Activated naive CD4-positive, alpha-beta T cell treated with anti-CD3 and anti-CD28 coated beads for 36 hours (primary cell): ENCODE measurements at regions of chr2 and their contacts with region 1.

Region 1: GRCh38 chr2:75403991-75404428 is 156.7 kb downstream of the EVA1A start:
- DNase-seq: no peak
- H3K4me3 Mint-ChIP-seq: no peak overlapping the region
- H3K27ac Mint-ChIP-seq: no peak overlapping the region
- H3K4me1 Mint-ChIP-seq: peaks cover 6% of the 10 kb centered on the region
- H3K27me3 Mint-ChIP-seq: no peaks in the 10 kb centered on the region

Region 2: DNA sequence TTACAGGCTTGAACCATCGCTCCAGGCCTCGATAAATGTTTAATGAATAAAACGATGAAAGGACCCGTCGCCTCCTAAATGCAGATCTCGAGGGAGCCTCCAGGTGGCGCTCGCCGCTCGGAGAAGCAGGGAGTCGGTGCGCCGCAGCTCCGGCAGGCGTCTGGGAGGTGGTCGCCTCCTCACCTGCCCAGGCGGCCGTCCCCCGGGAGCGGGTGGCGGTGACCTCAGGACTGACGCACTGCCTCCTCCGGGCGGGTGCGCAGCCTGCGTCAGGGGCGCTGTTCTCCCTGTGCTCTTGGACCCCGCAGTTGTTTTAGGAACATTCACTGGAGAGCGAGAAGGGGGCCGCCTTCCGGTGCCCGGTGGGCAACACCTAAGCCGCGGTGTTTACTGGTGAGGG is 484.2 kb before region 1 on chr2:
- CTCF ChIA-PET with region 1: interaction called, 14 read pairs
- intact Hi-C with region 1: loop called (anchors 1 kb)
- DNase-seq: peak; percentile 80
- H3K4me3 Mint-ChIP-seq: peak overlapping the region; percentile 41
- H3K27ac Mint-ChIP-seq: no peak overlapping the region
- H3K4me1 Mint-ChIP-seq: peaks cover 5% of the 10 kb centered on the region
- H3K27me3 Mint-ChIP-seq: peaks cover 3% of the 10 kb centered on the region

Region 3: DNA sequence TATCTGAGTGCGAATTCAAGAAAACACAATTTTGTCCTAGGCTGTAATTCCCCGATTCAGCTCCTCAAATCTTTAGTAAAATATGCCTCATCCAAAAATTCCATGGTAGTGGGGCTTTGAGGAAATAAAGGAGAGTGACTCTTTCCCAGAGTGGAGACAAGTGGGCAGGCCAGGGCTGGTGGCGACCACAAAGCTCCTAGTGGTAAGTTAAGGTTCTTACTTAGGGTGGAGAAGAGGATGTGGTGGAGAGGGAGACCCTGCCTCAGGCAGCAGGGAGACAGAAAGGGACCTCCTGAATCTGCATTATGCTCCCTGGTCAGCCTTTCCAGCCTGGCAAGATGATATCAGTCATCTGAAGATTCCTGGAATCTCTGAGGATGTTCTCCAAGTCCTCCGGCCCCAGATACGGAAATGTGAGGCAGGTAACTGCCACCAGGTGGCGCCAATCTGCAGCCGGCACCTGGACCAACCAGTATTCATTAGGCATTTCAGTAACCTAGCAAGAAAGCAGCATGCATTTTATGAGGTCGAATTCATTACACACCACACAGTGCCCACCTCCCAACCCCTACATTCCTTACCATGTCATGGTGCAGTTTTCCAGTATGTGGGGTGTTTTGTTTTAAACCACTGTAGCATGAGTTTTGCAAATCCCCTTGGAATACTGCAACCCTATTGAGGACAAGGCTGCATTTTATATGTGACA is 339.2 kb before region 1 on chr2:
- CTCF ChIA-PET with region 1: interaction called, 6 read pairs
- intact Hi-C with region 1: loop called (anchors 1 kb)
- DNase-seq: peak; percentile 61
- H3K4me3 Mint-ChIP-seq: no peak overlapping the region
- H3K27ac Mint-ChIP-seq: no peak overlapping the region
- H3K4me1 Mint-ChIP-seq: no peaks in the 10 kb centered on the region
- H3K27me3 Mint-ChIP-seq: no peaks in the 10 kb centered on the region

Region 4: GRCh38 chr2:75157430-75157829 is 246.6 kb before region 1 on chr2:
- CTCF ChIA-PET with region 1: no interaction called
- intact Hi-C with region 1: loop called (anchors 5 kb)
- DNase-seq: no peak
- H3K4me3 Mint-ChIP-seq: no peak overlapping the region
- H3K27ac Mint-ChIP-seq: no peak overlapping the region
- H3K4me1 Mint-ChIP-seq: no peaks in the 10 kb centered on the region
- H3K27me3 Mint-ChIP-seq: no peaks in the 10 kb centered on the region

Region 5: DNA sequence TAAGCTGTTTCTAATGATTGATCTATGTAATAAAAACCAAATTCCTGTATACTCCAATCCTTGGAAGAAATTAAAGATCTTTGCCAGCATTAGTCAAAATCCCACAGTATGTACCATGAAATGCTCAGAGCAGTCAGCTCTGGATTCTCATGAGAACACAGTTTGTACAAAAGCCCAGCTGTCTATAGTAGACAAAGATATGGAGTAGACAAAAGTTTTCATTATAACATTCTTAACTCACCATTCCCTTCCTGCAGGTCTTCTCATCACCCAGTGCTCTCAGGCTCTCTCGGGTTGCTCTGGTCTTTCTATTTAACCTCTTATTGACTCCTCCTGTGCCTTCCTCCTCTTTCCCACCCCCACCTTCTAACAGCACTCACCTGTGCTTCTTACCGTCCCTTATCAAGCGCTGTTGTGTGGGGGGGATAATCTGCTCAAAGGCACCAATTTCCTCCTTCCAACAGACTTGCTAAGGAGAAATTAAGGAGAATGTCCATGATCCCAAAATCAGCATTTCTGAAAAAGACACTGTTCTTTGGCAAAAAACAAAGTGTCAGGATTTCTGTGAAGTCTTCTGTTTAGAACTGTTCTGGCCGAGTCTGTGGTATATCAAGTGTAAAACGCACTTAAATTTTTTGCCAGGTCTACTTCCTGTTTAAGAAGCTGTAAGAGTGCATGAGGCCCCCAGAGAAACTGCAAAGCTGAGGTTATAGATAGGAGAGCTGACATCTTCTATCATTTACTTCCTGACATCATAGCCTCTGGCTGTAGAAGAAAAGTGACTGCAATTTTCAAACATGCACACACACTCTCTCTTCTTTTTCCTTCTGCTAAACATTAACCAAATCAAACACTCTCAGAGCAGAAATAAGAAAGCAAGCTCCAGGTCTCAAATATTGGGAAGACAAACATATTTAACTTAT is 12.7 kb after region 1 on chr2:
- CTCF ChIA-PET with region 1: interaction called, 3 read pairs
- intact Hi-C with region 1: loop called (anchors 1 kb)
- DNase-seq: peak; percentile 14
- H3K4me3 Mint-ChIP-seq: peak overlapping the region; percentile 74
- H3K27ac Mint-ChIP-seq: peak overlapping the region; percentile 71
- H3K4me1 Mint-ChIP-seq: peaks cover 26% of the 10 kb centered on the region
- H3K27me3 Mint-ChIP-seq: no peaks in the 10 kb centered on the region

Region 6: GRCh38 chr2:75627895-75628504 is 224.0 kb after region 1 on chr2:
- CTCF ChIA-PET with region 1: interaction called, 3 read pairs
- intact Hi-C with region 1: loop called (anchors 5 kb)
- DNase-seq: peak; percentile 79
- H3K4me3 Mint-ChIP-seq: no peak overlapping the region
- H3K27ac Mint-ChIP-seq: no peak overlapping the region
- H3K4me1 Mint-ChIP-seq: no peaks in the 10 kb centered on the region
- H3K27me3 Mint-ChIP-seq: peaks cover 18% of the 10 kb centered on the region